Heart right ventricle (tissue), 16 donors: ENCODE measurements at regions of chr6 and their contacts with region 1.

Region 1: GRCh38 chr6:165662749-165663282 is at the start of gene PDE10A:
- DNase-seq: peak; percentile 76 to 79
- ATAC-seq: peak; percentile 41 to 82 (median 72)
- H3K4me3 ChIP-seq: peak within 1 kb of the TSS; percentile 72 to 96 (median 90)
- H3K27ac ChIP-seq: peak within 1 kb of the TSS; percentile 85 to 98 (median 93)
- H3K4me1 ChIP-seq: peaks cover 0 to 37% (median 23%) of the 10 kb centered on the region in 9 donors
- H3K27me3 ChIP-seq: peaks cover 0 to 75% (median 36%) of the 10 kb centered on the region in 7 donors
- CTCF ChIP-seq: peak in 4 of 9 donors; percentile 5 to 31 (median 21)
- total RNA-seq, gene PDE10A: 10.0 to 20.4 (median 14.9) TPM

Region 2: DNA sequence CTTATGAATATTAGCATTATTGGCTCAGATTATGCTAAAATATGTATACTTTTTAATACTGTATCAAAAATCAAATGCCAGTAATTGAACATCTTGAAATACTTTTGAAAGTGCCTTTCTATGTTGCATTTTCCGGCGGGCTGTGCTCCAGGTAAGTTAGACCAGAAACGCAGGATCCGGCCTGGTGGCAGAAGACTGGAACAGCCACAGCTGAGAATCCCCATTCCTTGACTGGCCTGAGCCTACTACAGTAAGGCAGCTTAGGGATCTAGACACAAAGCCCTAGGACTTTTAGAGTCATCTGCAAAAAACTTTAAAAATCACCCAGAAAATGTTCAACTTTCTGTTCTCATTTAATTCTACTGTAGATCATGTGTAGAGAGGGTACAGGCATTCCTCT is 214.6 kb before region 1 on chr6:
- intact Hi-C with region 1: loop called in 7 of 10 experiments (anchors 2 to 10 kb)
- DNase-seq: no peak
- ATAC-seq: no peak
- H3K4me3 ChIP-seq: no peak overlapping the region
- H3K27ac ChIP-seq: no peak overlapping the region
- H3K4me1 ChIP-seq: peaks cover 0 to 4% (median 0%) of the 10 kb centered on the region in 9 donors
- H3K27me3 ChIP-seq: no peaks in the 10 kb centered on the region
- CTCF ChIP-seq: no peak

Region 3: GRCh38 chr6:165556116-165556843 is 106.5 kb before region 1 on chr6:
- intact Hi-C with region 1: loop called in 1 of 10 experiments (anchors 10 kb)
- DNase-seq: no peak
- ATAC-seq: peak in 3 of 8 donors; percentile 47 to 63 (median 62)
- H3K4me3 ChIP-seq: no peak overlapping the region
- H3K27ac ChIP-seq: no peak overlapping the region
- H3K4me1 ChIP-seq: peaks cover 0 to 28% (median 9%) of the 10 kb centered on the region in 9 donors
- H3K27me3 ChIP-seq: no peaks in the 10 kb centered on the region
- CTCF ChIP-seq: no peak

Region 4: GRCh38 chr6:165615636-165616035 is 47.2 kb before region 1 on chr6:
- intact Hi-C with region 1: loop called in 1 of 10 experiments (anchors 5 kb)
- DNase-seq: peak in 1 of 2 donors; percentile 44
- ATAC-seq: peak in 7 of 8 donors; percentile 81 to 95 (median 90)
- H3K4me3 ChIP-seq: peak overlapping the region in 9 of 10 donors; percentile 8 to 52 (median 42)
- H3K27ac ChIP-seq: peak overlapping the region in 9 of 10 donors; percentile 20 to 88 (median 74)
- H3K4me1 ChIP-seq: peaks cover 0 to 18% (median 10%) of the 10 kb centered on the region in 9 donors
- H3K27me3 ChIP-seq: no peaks in the 10 kb centered on the region
- CTCF ChIP-seq: no peak

Region 5: GRCh38 chr6:165701564-165702354 is 38.9 kb after region 1 on chr6:
- intact Hi-C with region 1: loop called in 3 of 10 experiments (anchors 2 to 5 kb)
- DNase-seq: no peak
- ATAC-seq: peak; percentile 20 to 72 (median 38)
- H3K4me3 ChIP-seq: no peak overlapping the region
- H3K27ac ChIP-seq: peak overlapping the region in 7 of 10 donors; percentile 34 to 81 (median 77)
- H3K4me1 ChIP-seq: peaks cover 0 to 53% (median 9%) of the 10 kb centered on the region in 9 donors
- H3K27me3 ChIP-seq: no peaks in the 10 kb centered on the region
- CTCF ChIP-seq: no peak

Region 6: GRCh38 chr6:165850434-165851019 is 187.7 kb after region 1 on chr6:
- intact Hi-C with region 1: loop called in 3 of 10 experiments (anchors 5 to 10 kb)
- DNase-seq: peak; percentile 76 to 81
- ATAC-seq: peak; percentile 59 to 84 (median 78)
- H3K4me3 ChIP-seq: peak overlapping the region in 7 of 10 donors; percentile 8 to 37 (median 31)
- H3K27ac ChIP-seq: no peak overlapping the region
- H3K4me1 ChIP-seq: peaks cover 5 to 35% (median 18%) of the 10 kb centered on the region in 9 donors
- H3K27me3 ChIP-seq: peaks cover 10 to 72% (median 34%) of the 10 kb centered on the region in 7 donors
- CTCF ChIP-seq: peak; percentile 91 to 100 (median 99)